MCF 10A (cell line): ENCODE measurements at regions of chr17 and their contacts with region 1.

Region 1: GRCh38 chr17:82592767-82593589 is 55.3 kb downstream of the WDR45B start:
- DNase-seq: peak; percentile 81
- H3K4me3 Mint-ChIP-seq: peak overlapping the region; percentile 76
- H3K27ac Mint-ChIP-seq: peak overlapping the region; percentile 59
- H3K4me1 Mint-ChIP-seq: peaks cover 6% of the 10 kb centered on the region
- H3K27me3 Mint-ChIP-seq: no peaks in the 10 kb centered on the region
- CTCF ChIP-seq: no peak

Region 2: DNA sequence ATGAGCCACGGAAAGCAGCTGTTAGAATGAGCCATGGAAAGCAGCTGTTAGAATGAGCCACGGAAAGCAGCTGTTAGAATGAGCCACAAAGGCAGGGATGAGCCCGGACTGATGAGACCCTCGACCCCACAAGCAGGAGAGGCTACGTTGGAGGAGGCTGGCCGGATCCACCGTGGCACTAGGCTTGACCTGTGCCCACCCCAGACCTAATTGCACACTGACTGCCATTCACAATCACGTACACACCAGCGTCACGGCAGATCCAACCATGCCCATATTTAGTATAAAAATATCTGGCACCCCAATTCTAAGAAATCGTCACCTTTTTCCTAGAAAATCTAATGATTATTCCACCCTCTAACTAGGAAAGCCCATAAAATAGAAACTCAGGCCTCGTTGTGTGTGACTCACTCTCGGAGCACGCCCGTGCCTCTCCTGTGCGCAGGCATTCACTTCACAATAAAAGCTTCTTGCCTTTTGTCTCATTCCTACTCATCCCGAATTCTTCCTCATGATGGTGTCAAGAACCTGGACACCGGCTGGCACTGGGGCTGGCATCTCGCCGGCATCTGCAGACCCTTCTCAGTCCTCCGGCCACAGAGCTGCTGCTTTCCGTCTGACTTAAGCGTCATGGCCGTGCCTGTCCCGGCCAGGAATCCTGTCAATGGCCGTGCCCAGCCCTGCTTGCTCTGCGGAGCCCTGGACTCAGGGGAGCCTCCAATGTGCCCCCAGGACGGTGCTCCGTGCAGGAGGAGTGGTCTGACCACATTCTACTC is 253.9 kb before region 1 on chr17:
- CTCF ChIA-PET with region 1: no interaction called
- POLR2A ChIA-PET with region 1: interaction called, 4 read pairs
- intact Hi-C with region 1: loop called (anchors 2 kb)
- DNase-seq: peak; percentile 87
- H3K4me3 Mint-ChIP-seq: peak overlapping the region; percentile 63
- H3K27ac Mint-ChIP-seq: peak overlapping the region; percentile 93
- H3K4me1 Mint-ChIP-seq: peaks cover 23% of the 10 kb centered on the region
- H3K27me3 Mint-ChIP-seq: no peaks in the 10 kb centered on the region
- CTCF ChIP-seq: no peak